HepG2 (cell line): ENCODE measurements at regions of chr10 and their contacts with region 1.

Region 1: DNA sequence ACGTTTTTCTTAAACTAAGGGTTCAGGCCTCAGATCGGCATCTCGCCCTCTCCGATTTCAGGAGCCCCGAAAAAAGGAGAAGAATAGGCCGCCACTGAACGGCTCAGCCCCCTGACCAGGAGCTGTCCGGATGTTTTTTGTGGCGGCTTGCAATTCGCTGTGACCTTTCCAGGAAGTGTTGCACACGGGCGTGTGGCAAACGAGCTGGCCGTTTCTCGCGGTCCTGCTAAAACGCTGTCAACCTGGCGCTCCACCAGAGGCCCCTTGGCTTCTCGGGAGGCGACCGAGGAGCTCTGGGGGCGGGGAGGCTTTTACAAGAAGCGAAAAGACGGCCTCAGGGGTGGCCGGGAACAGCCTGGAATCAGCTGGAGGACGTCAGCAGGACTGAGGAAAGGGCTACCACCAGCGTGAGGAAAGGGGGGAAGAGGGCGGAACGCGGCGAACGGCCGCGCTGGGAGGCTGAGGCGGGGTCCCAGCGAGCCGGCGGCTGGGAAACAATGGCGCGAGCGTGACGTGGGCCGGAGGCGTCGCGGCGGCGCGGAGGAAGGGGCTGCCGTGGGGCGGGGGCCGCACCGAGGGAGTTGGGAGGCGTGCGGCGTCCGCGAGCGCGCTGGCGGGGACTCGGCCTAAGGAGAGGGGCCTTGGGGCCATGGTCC is 493 bp downstream of the NT5C2 start:
- DNase-seq: peak; percentile 72
- ATAC-seq: peak; percentile 79
- H3K4me3 ChIP-seq: peak overlapping the region; percentile 82 to 98 (median 85)
- H3K27ac ChIP-seq: peak overlapping the region; percentile 93
- H3K4me1 ChIP-seq: peaks cover 69% of the 10 kb centered on the region
- H3K27me3 ChIP-seq: no peaks in the 10 kb centered on the region; a peak in 1 of 5 replicates
- CTCF ChIP-seq: peak; percentile 15; the same call in 1 of the 2 replicates
- EP300 ChIP-seq: no peak
- POLR2A ChIP-seq: no peak; a peak in 1 of 4 replicates
- RAD21 ChIP-seq: no peak

Region 2: GRCh38 chr10:103125323-103126267 is 67.0 kb before region 1 on chr10:
- CTCF ChIA-PET with region 1: no interaction called
- POLR2A ChIA-PET with region 1: interaction called, 10 read pairs
- in situ Hi-C with region 1: no loop called
- intact Hi-C with region 1: no loop called
- DNase-seq: no peak
- ATAC-seq: no peak
- H3K4me3 ChIP-seq: no peak overlapping the region
- H3K27ac ChIP-seq: peak overlapping the region; percentile 17
- H3K4me1 ChIP-seq: peaks cover 63% of the 10 kb centered on the region
- H3K27me3 ChIP-seq: no peaks in the 10 kb centered on the region
- CTCF ChIP-seq: no peak
- EP300 ChIP-seq: no peak
- POLR2A ChIP-seq: no peak
- RAD21 ChIP-seq: no peak

Region 3: GRCh38 chr10:103153302-103154197 is 39.0 kb before region 1 on chr10:
- CTCF ChIA-PET with region 1: no interaction called
- POLR2A ChIA-PET with region 1: interaction called, 28 read pairs
- in situ Hi-C with region 1: no loop called
- intact Hi-C with region 1: loop called (anchors 2 kb)
- DNase-seq: peak; percentile 51
- ATAC-seq: peak; percentile 71
- H3K4me3 ChIP-seq: peak overlapping the region; percentile 57 to 73 (median 59)
- H3K27ac ChIP-seq: peak overlapping the region; percentile 78
- H3K4me1 ChIP-seq: peaks cover 73% of the 10 kb centered on the region
- H3K27me3 ChIP-seq: no peaks in the 10 kb centered on the region
- CTCF ChIP-seq: no peak
- EP300 ChIP-seq: peak in 1 of 2 experiments; percentile 59; a peak in 1 of 4 replicates
- POLR2A ChIP-seq: no peak
- RAD21 ChIP-seq: no peak

Region 4: DNA sequence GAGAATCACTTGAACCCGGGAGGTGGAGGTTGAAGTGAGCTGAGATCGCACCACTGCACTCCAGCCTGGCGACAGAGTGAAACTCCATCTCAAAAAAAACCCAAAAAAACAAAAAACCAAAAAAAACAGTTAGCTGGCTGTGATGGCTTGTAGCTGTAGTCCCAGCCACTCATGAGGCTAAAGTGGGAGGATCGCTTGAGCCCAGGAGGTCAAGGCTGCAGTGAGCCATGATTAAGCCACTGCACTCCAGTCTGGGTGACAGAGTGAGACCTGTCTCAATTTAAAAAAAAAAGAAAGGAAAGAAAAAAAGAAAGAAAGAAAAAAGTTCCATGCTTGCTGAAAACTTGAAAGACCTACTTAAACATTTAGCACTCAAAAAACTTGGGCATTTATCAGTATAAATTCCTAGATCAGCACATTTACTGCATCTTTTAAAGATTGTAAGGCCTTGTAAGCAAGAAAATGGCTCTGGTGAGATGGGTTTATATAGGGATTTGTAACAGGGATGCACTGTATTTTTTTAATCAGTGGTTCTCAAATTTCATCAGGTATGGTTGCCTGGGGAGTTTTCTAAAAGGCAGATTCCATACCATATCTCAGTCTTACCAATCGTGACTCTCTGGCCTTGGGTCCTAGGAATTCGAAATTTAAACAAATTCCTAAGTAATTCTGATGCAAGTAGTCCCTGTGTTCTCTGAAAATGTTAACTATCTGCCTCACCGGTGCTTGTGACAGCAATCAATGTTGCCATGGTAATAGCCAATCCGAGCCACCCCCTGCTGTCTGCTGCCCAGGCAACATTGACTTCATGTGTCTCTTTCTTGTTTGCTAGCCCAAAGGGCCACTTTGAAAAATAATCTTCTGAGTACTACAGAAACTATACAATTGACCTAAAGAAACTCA is 12.0 kb after region 1 on chr10:
- CTCF ChIA-PET with region 1: no interaction called
- POLR2A ChIA-PET with region 1: interaction called, 14 read pairs
- in situ Hi-C with region 1: no loop called
- intact Hi-C with region 1: no loop called
- DNase-seq: peak; percentile 86
- ATAC-seq: peak; percentile 95
- H3K4me3 ChIP-seq: no peak overlapping the region
- H3K27ac ChIP-seq: peak overlapping the region; percentile 76
- H3K4me1 ChIP-seq: peaks cover 61% of the 10 kb centered on the region
- H3K27me3 ChIP-seq: no peaks in the 10 kb centered on the region
- CTCF ChIP-seq: no peak
- EP300 ChIP-seq: peak; percentile 52 to 64; a peak in 2 of 4 replicates
- POLR2A ChIP-seq: no peak
- RAD21 ChIP-seq: no peak

Region 5: GRCh38 chr10:103231047-103231551 is 38.5 kb after region 1 on chr10:
- CTCF ChIA-PET with region 1: no interaction called
- POLR2A ChIA-PET with region 1: interaction called, 65 read pairs
- in situ Hi-C with region 1: loop called (anchors 5 kb)
- intact Hi-C with region 1: loop called (anchors 2 kb)
- DNase-seq: peak; percentile 95
- ATAC-seq: peak; percentile 91
- H3K4me3 ChIP-seq: peak overlapping the region in 1 of 3 experiments; percentile 23; a peak in 1 of 6 replicates
- H3K27ac ChIP-seq: peak overlapping the region; percentile 81
- H3K4me1 ChIP-seq: peaks cover 71% of the 10 kb centered on the region
- H3K27me3 ChIP-seq: no peaks in the 10 kb centered on the region
- CTCF ChIP-seq: no peak
- EP300 ChIP-seq: peak; percentile 29 to 90; a peak in 2 of 4 replicates
- POLR2A ChIP-seq: no peak
- RAD21 ChIP-seq: no peak

Region 6: GRCh38 chr10:103238506-103239252 is 46.1 kb after region 1 on chr10:
- CTCF ChIA-PET with region 1: no interaction called
- POLR2A ChIA-PET with region 1: interaction called, 65 read pairs
- in situ Hi-C with region 1: loop called (anchors 5 kb)
- intact Hi-C with region 1: loop called (anchors 2 kb)
- DNase-seq: peak; percentile 63
- ATAC-seq: peak; percentile 89
- H3K4me3 ChIP-seq: peak overlapping the region in 1 of 3 experiments; percentile 50; a peak in 2 of 6 replicates
- H3K27ac ChIP-seq: no peak overlapping the region
- H3K4me1 ChIP-seq: peaks cover 39% of the 10 kb centered on the region
- H3K27me3 ChIP-seq: no peaks in the 10 kb centered on the region
- CTCF ChIP-seq: peak; percentile 78
- EP300 ChIP-seq: no peak
- POLR2A ChIP-seq: no peak
- RAD21 ChIP-seq: peak; percentile 69